ENCODE measurements at regions of chr3 and their contacts with region 1.

Region 1: DNA sequence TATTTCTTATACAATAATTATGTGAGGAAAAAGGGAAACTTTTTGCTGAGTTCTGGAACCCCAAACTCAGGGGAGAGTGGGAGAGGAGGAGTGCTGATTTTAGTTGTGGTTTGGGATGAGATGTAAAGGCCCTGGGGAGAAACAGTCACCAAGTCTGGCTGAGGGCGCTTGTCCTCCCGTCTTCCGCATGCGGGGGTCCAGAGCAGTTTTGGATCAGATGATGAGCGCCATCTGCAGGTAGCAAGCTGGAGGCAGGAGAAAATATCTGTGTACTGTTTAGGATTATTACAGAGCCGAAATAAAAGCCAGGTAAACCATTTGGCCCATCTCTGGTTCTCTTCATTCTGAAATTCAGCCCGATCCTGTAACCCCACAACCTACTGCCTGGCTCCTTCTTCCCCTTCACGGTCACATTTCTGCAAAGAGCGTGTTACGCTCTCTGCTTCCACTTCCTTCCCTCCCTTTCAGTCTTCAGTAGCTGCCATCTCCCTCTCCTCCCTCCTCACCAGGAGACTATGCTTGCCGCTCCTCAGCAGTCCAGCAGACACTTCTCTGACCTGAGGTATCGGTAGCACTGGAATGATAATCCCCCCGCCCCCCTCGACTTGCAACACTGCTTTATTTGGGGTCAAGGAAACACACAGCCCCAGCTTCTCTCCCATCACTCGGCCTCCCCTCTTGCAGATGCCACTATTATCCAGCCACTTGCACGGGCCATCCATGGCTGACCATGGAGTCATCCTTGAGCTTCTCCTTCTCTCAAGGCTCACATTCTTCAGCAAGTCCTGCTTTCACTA is 1.4 kb upstream of the PARP14 start:
- DNase-seq: peak; percentile 65 to 92 (median 83)
- ATAC-seq: peak; percentile 66
- H3K4me3 ChIP-seq: peak overlapping the region; percentile 88 to 98
- H3K4me3 Mint-ChIP-seq: peak overlapping the region; percentile 93
- H3K27ac ChIP-seq: peak overlapping the region; percentile 95 to 97
- H3K27ac Mint-ChIP-seq: peak overlapping the region; percentile 99
- H3K4me1 ChIP-seq: peaks cover 31% of the 10 kb centered on the region
- H3K4me1 Mint-ChIP-seq: peaks cover 51% of the 10 kb centered on the region
- H3K27me3 ChIP-seq: no peaks in the 10 kb centered on the region
- H3K27me3 Mint-ChIP-seq: no peaks in the 10 kb centered on the region
- CTCF ChIP-seq: peak; percentile 80

Region 2: GRCh38 chr3:121749276-121750086 is 929.8 kb before region 1 on chr3 and contains the start of gene GOLGB1:
- CTCF ChIA-PET with region 1: no interaction called
- POLR2A ChIA-PET with region 1: no interaction called
- intact Hi-C with region 1: loop called in 1 of 2 experiments (anchors 10 kb)
- DNase-seq: peak; percentile 74 to 99 (median 90)
- ATAC-seq: peak; percentile 94
- H3K4me3 ChIP-seq: peak within 1 kb of the TSS; percentile 86 to 94
- H3K4me3 Mint-ChIP-seq: no peak within 1 kb of the TSS
- H3K27ac ChIP-seq: peak within 1 kb of the TSS; percentile 97 to 98
- H3K27ac Mint-ChIP-seq: no peak within 1 kb of the TSS
- H3K4me1 ChIP-seq: peaks cover 19% of the 10 kb centered on the region
- H3K4me1 Mint-ChIP-seq: peaks cover 14% of the 10 kb centered on the region
- H3K27me3 ChIP-seq: peaks cover 0 to 6% of the 10 kb centered on the region in 2 experiments
- H3K27me3 Mint-ChIP-seq: peaks cover 4% of the 10 kb centered on the region
- CTCF ChIP-seq: no peak
- total RNA-seq, gene GOLGB1: 47.4 to 53.9 TPM

Region 3: GRCh38 chr3:122383771-122384697 is 295.2 kb before region 1 on chr3 and contains the start of gene FAM162A:
- CTCF ChIA-PET with region 1: interaction called, 29 read pairs
- POLR2A ChIA-PET with region 1: interaction called, 12 read pairs
- intact Hi-C with region 1: loop called (anchors 1 to 2 kb)
- DNase-seq: peak; percentile 89 to 97 (median 93)
- ATAC-seq: peak; percentile 94
- H3K4me3 ChIP-seq: peak within 1 kb of the TSS; percentile 79 to 91
- H3K4me3 Mint-ChIP-seq: peak within 1 kb of the TSS; percentile 94
- H3K27ac ChIP-seq: peak within 1 kb of the TSS; percentile 73 to 83
- H3K27ac Mint-ChIP-seq: peak within 1 kb of the TSS; percentile 94
- H3K4me1 ChIP-seq: peaks cover 18% of the 10 kb centered on the region
- H3K4me1 Mint-ChIP-seq: peaks cover 51% of the 10 kb centered on the region
- H3K27me3 ChIP-seq: no peaks in the 10 kb centered on the region
- H3K27me3 Mint-ChIP-seq: no peaks in the 10 kb centered on the region
- CTCF ChIP-seq: peak; percentile 66
- total RNA-seq, gene FAM162A: 36.9 to 38.2 TPM

Region 4: GRCh38 chr3:122458992-122459391 is 220.3 kb before region 1 on chr3:
- CTCF ChIA-PET with region 1: interaction called, 14 read pairs
- POLR2A ChIA-PET with region 1: no interaction called
- intact Hi-C with region 1: loop called in 1 of 2 experiments (anchors 5 kb)
- DNase-seq: peak in 2 of 9 experiments; percentile 15 to 23
- ATAC-seq: no peak
- H3K4me3 ChIP-seq: no peak overlapping the region
- H3K4me3 Mint-ChIP-seq: no peak overlapping the region
- H3K27ac ChIP-seq: no peak overlapping the region
- H3K27ac Mint-ChIP-seq: no peak overlapping the region
- H3K4me1 ChIP-seq: no peaks in the 10 kb centered on the region
- H3K4me1 Mint-ChIP-seq: peaks cover 6% of the 10 kb centered on the region
- H3K27me3 ChIP-seq: no peaks in the 10 kb centered on the region
- H3K27me3 Mint-ChIP-seq: no peaks in the 10 kb centered on the region
- CTCF ChIP-seq: peak; percentile 15

Region 5: GRCh38 chr3:122572940-122573412 is 106.3 kb before region 1 on chr3:
- CTCF ChIA-PET with region 1: interaction called, 16 read pairs
- POLR2A ChIA-PET with region 1: interaction called, 8 read pairs
- intact Hi-C with region 1: loop called in 1 of 2 experiments (anchors 5 kb)
- DNase-seq: peak in 6 of 9 experiments; percentile 19 to 68 (median 46)
- ATAC-seq: peak; percentile 62
- H3K4me3 ChIP-seq: no peak overlapping the region
- H3K4me3 Mint-ChIP-seq: no peak overlapping the region
- H3K27ac ChIP-seq: peak overlapping the region in 1 of 2 experiments; percentile 68
- H3K27ac Mint-ChIP-seq: peak overlapping the region; percentile 37
- H3K4me1 ChIP-seq: peaks cover 12% of the 10 kb centered on the region
- H3K4me1 Mint-ChIP-seq: peaks cover 53% of the 10 kb centered on the region
- H3K27me3 ChIP-seq: no peaks in the 10 kb centered on the region
- H3K27me3 Mint-ChIP-seq: no peaks in the 10 kb centered on the region
- CTCF ChIP-seq: no peak

Region 6: GRCh38 chr3:123201566-123202427 is 522.5 kb after region 1 on chr3 and contains the start of gene SEC22A:
- CTCF ChIA-PET with region 1: no interaction called
- POLR2A ChIA-PET with region 1: no interaction called
- intact Hi-C with region 1: loop called in 1 of 2 experiments (anchors 5 kb)
- DNase-seq: peak; percentile 91 to 99 (median 96)
- ATAC-seq: peak; percentile 96
- H3K4me3 ChIP-seq: peak within 1 kb of the TSS; percentile 82 to 96
- H3K4me3 Mint-ChIP-seq: peak within 1 kb of the TSS; percentile 83
- H3K27ac ChIP-seq: peak within 1 kb of the TSS; percentile 94 to 95
- H3K27ac Mint-ChIP-seq: peak within 1 kb of the TSS; percentile 98
- H3K4me1 ChIP-seq: peaks cover 18% of the 10 kb centered on the region
- H3K4me1 Mint-ChIP-seq: peaks cover 26% of the 10 kb centered on the region
- H3K27me3 ChIP-seq: no peaks in the 10 kb centered on the region
- H3K27me3 Mint-ChIP-seq: no peaks in the 10 kb centered on the region
- CTCF ChIP-seq: no peak
- total RNA-seq, gene SEC22A: 8.6 to 9.1 TPM